BJ (cell line): ENCODE measurements at regions of chr7 and their contacts with region 1.

Region 1: DNA sequence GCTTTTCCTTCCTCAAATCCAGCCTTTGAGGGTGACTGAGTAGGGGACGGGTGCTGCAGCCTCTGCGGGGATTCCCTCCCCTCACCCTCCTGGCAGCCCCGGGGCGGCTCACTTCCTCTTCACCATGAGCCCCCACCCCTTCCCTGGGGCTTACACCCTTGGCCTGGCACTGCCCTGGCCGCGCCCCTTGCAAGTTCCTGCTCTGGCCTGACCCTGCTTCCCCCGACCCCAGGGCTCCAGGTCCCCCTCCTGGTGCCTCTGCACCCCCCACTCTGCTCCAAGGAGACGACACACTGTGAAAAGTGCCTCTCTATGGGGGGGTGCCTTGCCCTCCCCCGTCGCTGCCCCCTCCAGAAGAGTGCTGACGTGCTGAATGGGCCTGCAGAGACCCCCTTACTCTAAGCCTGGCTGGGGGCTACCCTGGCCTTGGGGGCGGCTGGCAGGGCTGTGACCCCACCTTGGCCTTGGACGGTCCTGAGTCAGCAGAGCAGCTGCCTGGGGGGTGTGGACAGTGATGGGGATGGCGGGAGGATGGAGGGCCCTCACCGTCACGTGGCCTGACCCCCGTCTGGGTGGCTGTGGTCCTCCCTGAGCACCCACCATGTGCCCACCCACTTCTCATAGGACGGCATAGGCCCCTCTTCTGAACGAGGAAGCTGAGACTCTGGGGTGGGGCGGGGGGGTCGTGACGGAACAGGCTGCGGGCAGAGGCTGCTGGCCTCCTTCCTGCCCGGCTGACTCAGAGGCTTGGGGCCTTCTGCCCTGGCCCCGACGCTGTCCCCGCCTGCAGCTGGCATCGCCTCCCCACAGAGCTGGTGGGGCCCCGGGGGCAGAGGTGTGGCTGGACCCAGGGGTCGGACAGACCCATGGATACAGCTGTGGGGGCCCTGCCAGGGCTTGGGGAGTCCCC is 9.8 kb downstream of the LFNG start:
- DNase-seq: no peak
- H3K4me3 ChIP-seq: no peak overlapping the region
- H3K27me3 ChIP-seq: no peaks in the 10 kb centered on the region
- CTCF ChIP-seq: no peak

Region 2: DNA sequence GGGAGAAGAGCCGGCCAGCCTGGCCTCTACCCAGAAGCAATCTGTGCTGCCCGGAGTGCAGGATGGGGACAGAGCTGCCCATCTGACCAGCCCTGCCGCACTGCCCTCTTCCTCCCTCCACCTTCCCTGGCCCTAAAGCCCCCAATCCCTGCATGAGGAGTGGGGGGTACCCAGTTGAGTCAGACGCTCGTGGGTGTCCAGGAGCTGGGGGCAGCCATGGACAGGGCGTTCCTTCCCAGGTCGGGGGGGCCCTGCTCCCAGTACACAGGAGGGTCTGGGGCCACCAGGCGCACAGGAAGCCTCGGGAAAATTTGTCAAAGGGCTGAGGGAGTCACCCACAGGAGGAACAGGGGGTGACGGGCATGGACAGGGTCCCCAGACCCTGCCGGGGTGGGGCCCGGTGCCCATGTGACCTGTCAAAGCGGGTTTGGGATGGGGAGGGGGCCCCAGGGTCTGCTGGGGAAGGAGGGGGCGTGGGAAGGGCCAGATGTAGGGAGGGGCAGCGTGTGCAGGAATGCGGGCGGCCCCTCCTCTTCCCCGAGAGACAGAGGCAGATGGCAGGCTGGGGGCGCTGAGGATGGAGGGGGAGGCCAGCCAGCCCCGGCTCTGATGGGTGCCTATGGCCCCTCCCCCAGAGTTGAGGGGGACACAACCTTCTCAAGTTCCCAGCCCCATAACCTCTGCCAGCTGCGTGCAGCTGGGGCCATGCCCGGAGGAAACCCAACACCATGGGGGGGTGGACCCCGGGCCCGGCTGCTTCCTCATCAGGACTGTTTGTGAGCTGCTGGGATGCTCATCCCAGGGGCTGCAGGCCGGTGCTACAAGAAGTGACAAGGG is 31.7 kb before region 1 on chr7:
- CTCF ChIA-PET with region 1: no interaction called
- POLR2A ChIA-PET with region 1: interaction called, 19 read pairs
- DNase-seq: no peak
- H3K4me3 ChIP-seq: no peak overlapping the region
- H3K27me3 ChIP-seq: peaks cover 4% of the 10 kb centered on the region
- CTCF ChIP-seq: no peak